ENCODE measurements at regions of chr17 and their contacts with region 1.

Region 1: GRCh38 chr17:7219812-7220581 is at the starts of genes ACADVL and DLG4:
- DNase-seq: peak; percentile 85
- ATAC-seq: peak; percentile 66
- H3K4me3 ChIP-seq: peak within 1 kb of the TSS; percentile 81
- H3K27ac ChIP-seq: peak within 1 kb of the TSS; percentile 97
- H3K4me1 ChIP-seq: peaks cover 34% of the 10 kb centered on the region
- H3K27me3 ChIP-seq: no peaks in the 10 kb centered on the region
- CTCF ChIP-seq: no peak
- total RNA-seq, gene ACADVL: 558 and 646 TPM in 2 replicates
- total RNA-seq, gene DLG4: 6.5 and 12.8 TPM in 2 replicates

Region 2: DNA sequence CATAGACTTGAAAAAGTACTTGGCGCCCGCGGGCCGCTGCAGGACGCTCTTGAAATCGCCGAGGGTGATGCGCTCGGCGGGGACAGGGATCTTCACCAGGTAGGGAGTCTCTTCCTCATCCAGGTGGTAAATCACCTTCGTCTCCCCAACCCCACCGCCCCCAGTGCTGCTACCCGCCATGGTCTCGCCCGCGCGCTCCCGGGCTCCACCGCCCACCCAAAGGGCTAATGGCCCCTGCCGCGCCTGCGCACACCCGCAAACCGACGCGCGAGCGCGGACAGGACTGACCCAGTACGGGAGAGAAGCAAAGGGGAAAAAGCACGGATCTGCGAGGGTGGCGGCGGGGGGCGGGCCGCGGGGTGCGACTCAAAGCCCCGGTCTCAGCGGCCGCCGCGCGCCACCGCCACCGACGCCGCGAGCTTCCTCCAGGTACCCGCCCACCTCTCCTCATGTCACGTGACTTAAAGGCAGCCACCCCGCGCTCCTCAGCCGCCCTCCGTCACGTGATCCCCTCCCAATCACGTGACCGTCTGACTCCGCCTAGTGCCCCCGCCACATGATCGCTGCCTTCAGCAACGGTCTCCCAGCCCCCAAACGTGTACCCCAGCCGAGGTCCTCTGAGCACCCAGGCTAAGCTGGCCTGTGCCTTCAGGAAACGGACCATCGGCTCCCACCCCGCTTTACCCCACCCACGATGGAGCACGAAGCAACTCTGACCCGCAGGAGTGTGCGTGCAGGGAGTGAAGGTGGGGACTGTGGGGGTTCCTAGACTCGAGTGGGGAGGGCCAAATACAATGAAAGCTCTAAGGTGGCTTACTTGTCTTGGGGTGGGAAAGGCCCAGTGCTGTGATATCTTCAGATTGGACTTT is 14.3 kb after region 1 on chr17 and contains the start of gene DVL2:
- CTCF ChIA-PET with region 1: no interaction called
- POLR2A ChIA-PET with region 1: no interaction called
- intact Hi-C with region 1: loop called (anchors 2 kb)
- DNase-seq: peak; percentile 87
- ATAC-seq: peak; percentile 48
- H3K4me3 ChIP-seq: peak within 1 kb of the TSS; percentile 89
- H3K27ac ChIP-seq: peak within 1 kb of the TSS; percentile 64
- H3K4me1 ChIP-seq: peaks cover 33% of the 10 kb centered on the region
- H3K27me3 ChIP-seq: no peaks in the 10 kb centered on the region
- CTCF ChIP-seq: no peak
- total RNA-seq, gene DVL2: 36.9 and 65.7 TPM in 2 replicates